Caco-2 (cell line): ENCODE measurements at regions of chr1 and their contacts with region 1.

Region 1: DNA sequence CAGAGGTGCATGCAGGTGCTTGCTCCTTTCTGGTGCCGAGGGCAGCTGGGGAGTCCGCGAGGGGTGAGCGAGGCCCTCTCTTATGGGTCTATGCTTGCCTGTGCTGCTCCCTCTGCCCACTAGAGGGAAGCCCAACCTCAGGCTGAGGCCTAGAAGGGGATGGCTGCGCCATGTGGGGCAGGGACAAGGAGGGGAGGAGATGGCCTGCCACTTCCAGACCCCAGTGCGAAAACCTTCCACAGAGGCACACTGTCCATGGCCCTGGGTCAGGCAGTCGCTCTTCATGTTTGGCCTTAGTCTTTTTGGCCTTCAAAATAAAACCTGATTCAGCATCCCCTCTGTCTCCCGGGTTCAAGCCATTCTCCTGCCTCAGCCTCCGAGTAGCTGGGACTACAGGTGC is 14.0 kb downstream of the RHBG start:
- DNase-seq: peak; percentile 76 to 77
- H3K4me3 ChIP-seq: no peak overlapping the region
- H3K4me3 Mint-ChIP-seq: no peak overlapping the region
- H3K27ac Mint-ChIP-seq: no peak overlapping the region
- H3K4me1 ChIP-seq: peaks cover 21% of the 10 kb centered on the region
- H3K4me1 Mint-ChIP-seq: no peaks in the 10 kb centered on the region
- H3K27me3 ChIP-seq: no peaks in the 10 kb centered on the region
- H3K27me3 Mint-ChIP-seq: no peaks in the 10 kb centered on the region
- CTCF ChIP-seq: peak; percentile 85 to 90

Region 2: DNA sequence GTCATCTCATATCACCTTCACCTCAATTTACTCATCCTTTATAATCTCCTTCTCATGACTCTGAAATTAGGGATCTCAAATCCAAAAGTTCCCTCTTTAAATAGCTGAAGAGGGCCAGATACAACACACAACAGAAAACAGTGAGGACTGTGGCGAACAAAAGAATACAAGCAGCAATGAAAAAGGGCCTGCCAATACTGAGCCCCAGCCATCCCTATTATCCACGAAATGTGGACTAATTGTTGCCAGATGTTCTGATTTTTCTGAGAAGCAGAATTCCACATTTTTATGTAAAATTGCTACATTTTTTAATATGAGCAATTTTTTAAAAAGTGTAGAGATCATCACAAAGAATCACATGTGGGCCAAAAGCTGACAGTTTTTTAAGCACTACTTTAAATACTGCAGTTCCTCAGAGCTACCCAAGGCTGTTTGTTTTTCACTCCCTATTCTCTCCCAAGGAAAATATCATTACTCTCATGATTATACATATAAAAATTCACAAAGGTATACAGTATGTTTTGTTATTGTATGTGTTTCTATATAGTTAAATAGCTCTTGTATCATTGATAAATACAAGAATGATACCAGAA is 910.4 kb before region 1 on chr1:
- CTCF ChIA-PET with region 1: no interaction called
- POLR2A ChIA-PET with region 1: no interaction called
- intact Hi-C with region 1: no loop called
- DNase-seq: no peak
- H3K4me3 ChIP-seq: no peak overlapping the region
- H3K4me3 Mint-ChIP-seq: no peak overlapping the region
- H3K27ac Mint-ChIP-seq: no peak overlapping the region
- H3K4me1 ChIP-seq: no peaks in the 10 kb centered on the region
- H3K4me1 Mint-ChIP-seq: no peaks in the 10 kb centered on the region
- H3K27me3 ChIP-seq: no peaks in the 10 kb centered on the region
- H3K27me3 Mint-ChIP-seq: no peaks in the 10 kb centered on the region
- CTCF ChIP-seq: no peak

Region 3: DNA sequence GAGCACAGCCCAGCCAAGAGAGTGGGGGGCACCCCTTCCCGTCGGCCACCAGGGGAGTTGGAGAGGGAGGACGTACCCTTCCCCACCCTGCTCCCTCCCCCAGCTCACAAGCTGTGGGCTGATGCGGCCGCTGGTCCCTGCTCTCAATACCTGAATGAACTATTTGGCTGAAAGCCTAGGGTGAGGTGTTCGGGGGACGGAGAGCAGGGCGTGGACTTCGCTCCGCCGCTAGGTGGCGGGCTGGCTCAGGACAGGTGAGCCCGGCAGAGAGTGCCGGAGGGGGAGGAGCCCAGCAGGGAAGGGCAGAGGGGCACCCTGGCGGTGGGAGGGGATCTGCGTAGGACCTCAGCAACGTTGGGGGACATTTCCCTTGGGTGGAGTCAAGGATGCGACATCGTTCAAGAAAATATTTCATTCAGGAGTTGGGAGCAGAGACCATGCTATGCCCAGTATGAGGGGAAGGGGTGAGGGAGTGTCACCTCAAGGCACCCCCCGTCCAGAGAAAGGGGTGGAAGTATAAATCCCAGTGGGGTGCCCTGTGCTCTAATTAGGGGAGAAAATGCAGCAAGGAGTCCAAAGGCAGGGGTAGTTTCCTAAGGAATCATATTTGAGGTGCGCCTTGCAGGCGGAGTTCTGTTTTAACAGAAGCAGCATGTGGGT is 26.0 kb before region 1 on chr1:
- CTCF ChIA-PET with region 1: interaction called, 12 read pairs
- POLR2A ChIA-PET with region 1: no interaction called
- intact Hi-C with region 1: loop called (anchors 1 kb)
- DNase-seq: peak; percentile 87 to 90
- H3K4me3 ChIP-seq: peak overlapping the region; percentile 19
- H3K4me3 Mint-ChIP-seq: peak overlapping the region; percentile 67
- H3K27ac Mint-ChIP-seq: peak overlapping the region; percentile 60
- H3K4me1 ChIP-seq: 0 out of 2 replicates have a peak, but pooled peaks cover 3% of the 10 kb centered on the region
- H3K4me1 Mint-ChIP-seq: peaks cover 9% of the 10 kb centered on the region
- H3K27me3 ChIP-seq: no peaks in the 10 kb centered on the region
- H3K27me3 Mint-ChIP-seq: no peaks in the 10 kb centered on the region
- CTCF ChIP-seq: peak; percentile 93 to 99

Region 4: DNA sequence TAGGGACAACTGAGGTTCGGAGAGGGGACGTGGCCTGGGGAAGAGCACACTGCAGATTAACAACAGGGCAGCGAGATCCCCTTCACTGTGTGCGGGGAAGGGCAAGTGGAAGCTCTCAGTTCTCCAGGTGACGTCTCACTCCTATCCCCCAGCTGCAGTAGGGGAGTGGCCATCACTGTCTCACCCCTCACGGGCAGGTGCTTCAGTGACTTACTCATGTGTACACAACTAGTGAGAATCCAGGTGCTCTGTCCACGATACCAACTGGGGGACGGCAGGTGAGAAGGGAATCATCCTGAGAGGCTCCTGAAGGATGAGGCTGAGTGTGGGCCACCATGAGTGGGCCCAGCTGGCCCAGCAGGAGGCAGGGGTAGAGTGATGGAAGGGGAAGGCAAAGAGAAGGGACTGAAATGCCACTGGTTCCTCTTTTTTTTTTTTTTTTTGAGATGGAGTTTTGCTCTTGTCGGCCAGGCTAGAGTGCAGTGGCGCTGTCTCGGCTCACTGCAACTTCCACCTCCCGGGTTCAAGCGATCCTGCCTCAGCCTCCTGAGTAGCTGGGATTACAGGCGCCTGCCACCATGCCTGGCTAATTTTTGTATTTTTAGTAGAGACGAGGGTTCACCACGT is 11.9 kb after region 1 on chr1:
- CTCF ChIA-PET with region 1: interaction called, 12 read pairs
- POLR2A ChIA-PET with region 1: no interaction called
- intact Hi-C with region 1: no loop called
- DNase-seq: peak in 1 of 2 experiments; percentile 55
- H3K4me3 ChIP-seq: no peak overlapping the region
- H3K4me3 Mint-ChIP-seq: no peak overlapping the region
- H3K27ac Mint-ChIP-seq: peak overlapping the region; percentile 24
- H3K4me1 ChIP-seq: peaks cover 9% of the 10 kb centered on the region
- H3K4me1 Mint-ChIP-seq: peaks cover 25% of the 10 kb centered on the region
- H3K27me3 ChIP-seq: no peaks in the 10 kb centered on the region
- H3K27me3 Mint-ChIP-seq: no peaks in the 10 kb centered on the region
- CTCF ChIP-seq: no peak

Region 5: GRCh38 chr1:156421062-156421938 is 38.3 kb after region 1 on chr1:
- CTCF ChIA-PET with region 1: interaction called, 43 read pairs
- POLR2A ChIA-PET with region 1: interaction called, 3 read pairs
- intact Hi-C with region 1: loop called (anchors 2 kb)
- DNase-seq: peak; percentile 91 to 93
- H3K4me3 ChIP-seq: peak overlapping the region; percentile 47
- H3K4me3 Mint-ChIP-seq: peak overlapping the region; percentile 80
- H3K27ac Mint-ChIP-seq: peak overlapping the region; percentile 76
- H3K4me1 ChIP-seq: peaks cover 41% of the 10 kb centered on the region
- H3K4me1 Mint-ChIP-seq: peaks cover 16% of the 10 kb centered on the region
- H3K27me3 ChIP-seq: no peaks in the 10 kb centered on the region; the same call in 1 of the 2 replicates
- H3K27me3 Mint-ChIP-seq: peaks cover 11% of the 10 kb centered on the region
- CTCF ChIP-seq: no peak

Region 6: DNA sequence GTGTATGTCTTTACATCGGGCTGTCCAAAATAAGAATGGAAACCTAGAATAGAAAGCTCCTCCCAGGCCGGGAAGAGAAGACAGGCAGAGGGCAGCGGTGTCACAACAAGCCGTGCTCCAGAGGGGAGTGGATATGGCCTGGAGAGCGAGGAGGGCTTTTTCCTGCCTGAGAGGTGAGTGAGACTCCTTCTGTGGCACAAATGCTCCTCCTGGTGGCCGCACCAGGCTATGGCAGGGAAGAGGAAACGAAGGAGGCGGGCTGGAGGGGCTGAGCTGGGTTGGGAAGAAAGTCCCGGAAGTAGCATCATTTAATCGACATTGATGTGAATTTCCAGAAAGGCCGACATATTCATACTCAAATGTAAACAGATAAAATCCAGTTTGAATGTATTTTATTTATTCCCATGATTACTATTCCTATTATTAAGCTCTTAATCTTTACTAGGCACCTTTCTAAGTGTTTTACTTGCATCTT is 62.8 kb after region 1 on chr1:
- CTCF ChIA-PET with region 1: interaction called, 163 read pairs
- POLR2A ChIA-PET with region 1: interaction called, 6 read pairs
- intact Hi-C with region 1: loop called (anchors 1 kb)
- DNase-seq: peak; percentile 89 to 92
- H3K4me3 ChIP-seq: no peak overlapping the region
- H3K4me3 Mint-ChIP-seq: no peak overlapping the region
- H3K27ac Mint-ChIP-seq: no peak overlapping the region
- H3K4me1 ChIP-seq: no peaks in the 10 kb centered on the region
- H3K4me1 Mint-ChIP-seq: no peaks in the 10 kb centered on the region
- H3K27me3 ChIP-seq: peaks cover 1% of the 10 kb centered on the region; the same call in 1 of the 2 replicates
- H3K27me3 Mint-ChIP-seq: peaks cover 11% of the 10 kb centered on the region
- CTCF ChIP-seq: peak; percentile 93 to 95

Region 7: GRCh38 chr1:156601122-156601830 is 218.3 kb after region 1 on chr1 and contains the start of gene GPATCH4:
- CTCF ChIA-PET with region 1: interaction called, 5 read pairs
- POLR2A ChIA-PET with region 1: no interaction called
- intact Hi-C with region 1: loop called (anchors 10 kb)
- DNase-seq: peak; percentile 85
- H3K4me3 ChIP-seq: peak within 1 kb of the TSS; percentile 84
- H3K4me3 Mint-ChIP-seq: peak within 1 kb of the TSS; percentile 79
- H3K27ac Mint-ChIP-seq: peak within 1 kb of the TSS; percentile 88
- H3K4me1 ChIP-seq: peaks cover 8% of the 10 kb centered on the region; the same call in 1 of the 2 replicates
- H3K4me1 Mint-ChIP-seq: no peaks in the 10 kb centered on the region
- H3K27me3 ChIP-seq: no peaks in the 10 kb centered on the region
- H3K27me3 Mint-ChIP-seq: no peaks in the 10 kb centered on the region
- CTCF ChIP-seq: no peak
- total RNA-seq, gene GPATCH4: 52.5 and 53.5 TPM in 2 replicates